CD4-positive, alpha-beta T cell (primary cell): ENCODE measurements at regions of chr9 and their contacts with region 1.

Region 1: DNA sequence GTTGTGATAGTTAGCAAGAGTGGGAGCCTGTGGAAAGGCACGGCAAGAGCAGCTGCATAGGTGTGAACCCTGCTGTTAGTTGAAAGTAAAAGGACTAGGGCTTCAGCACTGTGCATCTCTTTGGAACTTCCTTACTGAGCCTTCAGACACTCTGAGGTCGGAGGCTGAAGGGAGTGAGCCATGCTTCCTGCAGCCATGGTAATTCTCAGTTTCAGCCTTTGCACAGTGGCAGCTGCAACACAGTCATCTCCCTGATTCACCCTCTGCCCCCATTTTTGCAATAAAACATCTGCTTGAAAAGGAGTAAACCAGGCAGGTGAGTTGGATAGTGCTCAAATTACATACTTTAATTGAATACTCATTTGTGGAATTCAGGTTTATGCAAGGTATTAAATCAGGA is 6.5 kb upstream of the TLE4 start:
- DNase-seq: no peak
- ATAC-seq: no peak
- H3K4me3 ChIP-seq: no peak overlapping the region
- H3K4me3 Mint-ChIP-seq: no peak overlapping the region
- H3K27ac ChIP-seq: no peak overlapping the region
- H3K27ac Mint-ChIP-seq: no peak overlapping the region
- H3K4me1 ChIP-seq: peaks cover 5% of the 10 kb centered on the region
- H3K4me1 Mint-ChIP-seq: peaks cover 6% of the 10 kb centered on the region
- H3K27me3 ChIP-seq: peaks cover 5 to 8% of the 10 kb centered on the region in 2 experiments
- H3K27me3 Mint-ChIP-seq: peaks cover 35% of the 10 kb centered on the region
- CTCF ChIP-seq: no peak

Region 2: GRCh38 chr9:79477955-79478771 is 87.1 kb before region 1 on chr9:
- CTCF ChIA-PET with region 1: no interaction called
- POLR2A ChIA-PET with region 1: no interaction called
- intact Hi-C with region 1: loop called (anchors 5 to 10 kb)
- DNase-seq: peak in 7 of 14 experiments; percentile 4 to 48 (median 31)
- ATAC-seq: peak; percentile 62
- H3K4me3 ChIP-seq: no peak overlapping the region
- H3K4me3 Mint-ChIP-seq: no peak overlapping the region
- H3K27ac ChIP-seq: no peak overlapping the region
- H3K27ac Mint-ChIP-seq: no peak overlapping the region
- H3K4me1 ChIP-seq: no peaks in the 10 kb centered on the region
- H3K4me1 Mint-ChIP-seq: no peaks in the 10 kb centered on the region
- H3K27me3 ChIP-seq: no peaks in the 10 kb centered on the region
- H3K27me3 Mint-ChIP-seq: no peaks in the 10 kb centered on the region
- CTCF ChIP-seq: peak; percentile 51

Region 3: DNA sequence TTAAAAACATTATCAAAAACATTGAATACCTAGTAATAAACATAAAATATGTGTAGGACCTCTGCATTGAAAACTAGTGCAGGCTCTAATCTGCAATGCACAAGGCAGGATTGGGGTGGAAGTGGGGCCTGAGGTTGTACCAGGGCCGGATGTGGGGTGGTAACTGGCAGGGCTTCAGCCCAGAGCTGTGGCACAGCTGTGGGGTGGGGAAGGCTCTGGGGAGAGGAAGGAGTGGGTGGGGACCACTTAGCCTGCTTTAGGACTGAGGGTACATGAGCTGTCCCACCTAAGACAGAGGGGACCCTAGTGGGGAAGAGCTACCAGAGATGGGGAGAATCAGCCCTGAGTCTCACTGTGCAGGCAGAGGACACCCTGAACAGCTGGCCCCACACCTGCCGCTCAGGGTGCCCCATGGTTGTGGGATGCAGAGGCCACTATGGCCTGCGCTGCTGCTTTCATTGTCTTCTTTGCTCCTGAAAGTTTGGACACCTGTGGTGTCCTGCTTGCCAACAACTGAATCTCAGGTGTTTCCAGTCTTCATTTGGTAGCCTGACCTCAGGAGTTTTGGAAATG is 317.9 kb after region 1 on chr9:
- CTCF ChIA-PET with region 1: no interaction called
- POLR2A ChIA-PET with region 1: no interaction called
- intact Hi-C with region 1: no loop called
- DNase-seq: peak in 13 of 14 experiments; percentile 15 to 87 (median 46)
- ATAC-seq: peak; percentile 88
- H3K4me3 ChIP-seq: no peak overlapping the region
- H3K4me3 Mint-ChIP-seq: peak overlapping the region; percentile 74
- H3K27ac ChIP-seq: no peak overlapping the region
- H3K27ac Mint-ChIP-seq: no peak overlapping the region
- H3K4me1 ChIP-seq: peaks cover 24% of the 10 kb centered on the region
- H3K4me1 Mint-ChIP-seq: peaks cover 75% of the 10 kb centered on the region
- H3K27me3 ChIP-seq: no peaks in the 10 kb centered on the region
- H3K27me3 Mint-ChIP-seq: no peaks in the 10 kb centered on the region
- CTCF ChIP-seq: no peak